GM10248 (cell line): ENCODE measurements at regions of chr16 and their contacts with region 1.

Region 1: DNA sequence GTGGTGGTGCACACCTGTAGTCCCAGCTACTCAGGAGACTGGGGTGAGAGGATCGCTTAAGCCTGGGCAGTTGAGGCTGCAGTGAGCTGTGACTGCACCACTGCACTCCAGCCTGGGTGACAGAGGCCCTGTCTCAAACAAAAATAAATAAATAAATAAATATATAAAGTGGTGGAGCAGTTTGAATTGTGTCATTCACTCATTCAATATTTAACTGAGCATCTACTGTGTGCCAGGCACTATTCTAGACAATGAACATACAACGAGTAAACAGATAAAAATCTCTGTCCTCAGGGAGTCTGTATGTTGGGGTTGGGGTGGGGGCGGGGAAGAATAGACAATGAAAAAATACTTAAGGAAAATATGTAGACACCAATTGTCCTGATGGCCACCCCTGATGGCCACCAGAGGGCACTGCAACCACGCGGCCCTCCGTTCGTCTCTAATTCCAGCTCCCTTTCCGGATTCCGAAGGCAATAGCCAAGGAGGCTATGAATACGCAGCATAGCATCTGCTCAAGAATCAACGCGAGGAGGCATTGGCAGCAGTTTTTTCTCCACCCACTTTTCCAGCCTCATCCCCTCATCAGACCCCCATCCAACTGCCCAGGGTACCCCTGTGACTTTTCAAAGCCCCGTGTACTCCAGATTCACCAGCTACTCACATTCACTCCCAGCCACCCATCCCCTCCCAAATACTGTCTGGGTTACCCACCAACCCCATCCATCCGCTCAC is 21.4 kb downstream of the QPRT start:
- DNase-seq: peak; percentile 73
- CTCF ChIP-seq: peak; percentile 56

Region 2: GRCh38 chr16:29668261-29668660 is 32.2 kb before region 1 on chr16:
- CTCF ChIA-PET with region 1: no interaction called
- POLR2A ChIA-PET with region 1: no interaction called
- DNase-seq: no peak
- CTCF ChIP-seq: no peak

Region 3: GRCh38 chr16:29686740-29687332 is 13.6 kb before region 1 on chr16:
- CTCF ChIA-PET with region 1: interaction called, 32 read pairs
- POLR2A ChIA-PET with region 1: interaction called, 3 read pairs
- DNase-seq: no peak
- CTCF ChIP-seq: no peak

Region 4: DNA sequence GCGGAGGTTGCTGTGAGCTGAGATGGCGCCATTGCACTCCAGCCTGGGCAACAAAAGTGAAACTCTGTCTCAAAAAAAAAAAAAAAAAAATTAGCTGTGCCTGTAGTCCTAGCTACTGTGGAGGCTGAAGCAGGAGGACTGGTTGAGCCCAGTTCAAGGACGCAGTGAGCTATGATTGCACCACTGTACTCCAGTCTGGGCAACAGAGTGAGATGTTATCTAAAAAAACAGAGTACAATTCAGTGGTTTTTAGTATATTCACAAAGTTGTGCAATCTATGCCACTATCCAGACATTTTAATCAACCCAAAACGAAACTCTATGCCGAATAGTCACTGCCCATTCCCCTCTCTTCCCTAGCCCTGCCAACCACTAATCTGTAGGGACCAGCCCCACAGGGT is 20.3 kb after region 1 on chr16:
- CTCF ChIA-PET with region 1: interaction called, 13 read pairs
- POLR2A ChIA-PET with region 1: no interaction called
- DNase-seq: no peak
- CTCF ChIP-seq: no peak

Region 5: DNA sequence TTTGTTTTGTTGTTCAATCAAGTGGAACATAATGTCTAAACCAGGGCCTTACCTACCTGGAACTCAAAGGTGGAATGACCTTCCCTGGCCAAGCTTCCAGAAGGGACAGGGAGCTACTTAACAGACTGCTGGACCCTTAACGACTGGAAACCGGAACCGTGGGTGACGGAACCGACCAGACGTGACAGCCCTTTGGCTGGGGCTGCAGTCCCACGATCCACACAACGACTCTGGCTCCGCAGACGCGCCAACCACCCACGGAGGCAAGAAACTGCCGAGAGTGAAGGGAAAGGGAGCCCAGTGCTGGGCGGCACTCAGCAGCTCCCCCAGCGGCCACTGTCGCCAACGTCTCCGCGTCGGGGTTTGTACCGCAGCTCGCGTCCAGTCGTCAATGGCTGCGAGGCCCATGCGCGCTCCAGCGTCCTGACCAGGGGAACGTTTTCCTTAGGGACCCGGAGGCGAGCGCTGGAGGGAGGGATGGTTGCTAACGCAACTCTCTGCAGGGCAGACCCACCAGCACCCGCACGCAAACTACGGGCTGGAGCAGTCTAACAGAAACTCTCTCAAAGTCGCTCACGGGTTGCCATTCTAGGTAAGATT is 84.6 kb after region 1 on chr16:
- CTCF ChIA-PET with region 1: interaction called, 21 read pairs
- POLR2A ChIA-PET with region 1: no interaction called
- DNase-seq: peak; percentile 79
- CTCF ChIP-seq: peak; percentile 87

Region 6: DNA sequence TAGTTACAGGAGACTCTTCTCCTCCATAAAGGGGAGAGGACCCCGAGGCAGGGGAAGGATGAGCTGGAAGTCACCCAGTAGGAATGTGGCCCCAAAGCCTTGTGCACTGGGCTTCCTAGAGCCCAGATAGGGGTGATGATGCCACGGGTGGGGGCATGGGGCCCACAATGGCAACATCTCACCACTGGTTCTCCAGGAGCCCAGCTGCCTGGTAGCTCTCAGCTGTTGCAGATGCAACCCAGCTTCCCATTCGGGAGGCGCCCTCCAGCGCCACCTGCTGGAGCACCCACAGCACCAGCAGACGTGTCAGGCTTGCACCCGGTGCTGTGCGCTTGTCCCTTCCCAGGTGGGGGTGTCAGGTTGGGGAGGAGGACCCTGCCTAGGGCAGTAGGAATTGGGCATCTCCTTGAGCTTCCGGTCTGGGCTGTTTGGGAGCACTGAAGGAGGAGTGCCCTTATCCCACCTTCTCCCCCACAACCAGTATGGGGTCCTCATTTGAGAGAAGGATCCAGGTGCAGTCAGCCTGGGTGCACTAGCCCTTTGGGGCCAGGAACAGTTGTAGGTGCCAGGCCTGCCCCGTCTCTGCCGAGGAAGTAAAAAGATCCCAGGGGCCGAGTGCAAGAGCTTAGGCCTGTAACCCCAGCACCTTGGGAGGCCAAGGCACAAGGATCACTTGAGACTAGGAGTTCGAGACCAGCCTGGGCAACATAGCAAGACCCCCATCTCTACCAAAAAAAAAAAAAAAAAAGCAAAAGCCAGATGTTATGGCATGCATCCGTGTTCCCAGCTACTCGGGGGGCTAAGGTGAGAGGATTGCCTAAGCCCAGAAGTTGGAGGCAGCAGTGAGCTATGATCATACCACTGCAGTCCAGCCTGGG is 148.2 kb after region 1 on chr16:
- CTCF ChIA-PET with region 1: interaction called, 32 read pairs
- POLR2A ChIA-PET with region 1: no interaction called
- DNase-seq: peak; percentile 83
- CTCF ChIP-seq: peak; percentile 93

Region 7: DNA sequence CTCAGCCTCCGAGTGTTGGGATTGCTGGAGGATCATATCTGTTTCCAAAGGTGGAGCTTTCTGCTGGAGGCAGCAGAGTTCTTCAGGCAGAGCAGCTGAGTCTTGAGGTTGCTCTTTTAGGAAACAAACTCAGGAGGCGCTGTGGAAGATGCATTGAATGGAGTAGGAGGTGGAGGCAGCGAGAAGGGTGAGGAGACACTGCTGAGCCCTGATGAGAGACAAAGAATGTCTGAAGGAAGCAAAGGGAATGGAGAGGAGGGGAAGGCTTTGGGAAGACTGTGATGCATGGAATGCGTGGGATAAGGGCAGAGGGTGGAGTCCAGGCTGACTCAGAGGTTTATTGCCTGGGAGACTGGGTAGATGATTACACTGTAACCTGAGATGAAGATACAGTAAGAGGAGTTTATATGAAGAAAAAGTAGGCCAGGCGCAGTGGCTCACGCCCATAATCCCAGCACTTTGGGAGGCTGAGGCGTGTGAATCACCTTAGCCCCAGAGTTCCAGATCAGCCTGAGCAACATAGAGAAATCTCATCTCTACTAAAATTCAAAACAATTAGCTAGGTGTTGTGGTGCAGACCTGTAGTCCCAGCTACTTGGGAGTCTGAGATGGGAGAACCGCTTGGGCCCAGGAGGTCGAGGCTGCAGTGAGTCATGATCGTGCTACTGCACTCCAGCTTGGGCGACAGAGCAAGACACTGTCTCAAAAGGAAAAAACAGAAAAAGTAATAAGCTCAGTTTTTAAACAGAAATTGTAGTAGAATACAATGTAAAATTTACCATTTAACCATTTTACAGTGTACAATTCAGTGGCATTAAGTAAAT is 243.6 kb after region 1 on chr16:
- CTCF ChIA-PET with region 1: no interaction called
- POLR2A ChIA-PET with region 1: no interaction called
- DNase-seq: no peak
- CTCF ChIP-seq: no peak